GM10248 (cell line): ENCODE measurements at regions of chr16 and their contacts with region 1.

Region 1: GRCh38 chr16:69396187-69397061 is 10.6 kb upstream of the TERF2 start:
- DNase-seq: peak; percentile 57
- CTCF ChIP-seq: peak; percentile 38

Region 2: GRCh38 chr16:69410285-69410990 is 14.0 kb after region 1 on chr16:
- CTCF ChIA-PET with region 1: interaction called, 21 read pairs
- POLR2A ChIA-PET with region 1: no interaction called
- DNase-seq: no peak
- CTCF ChIP-seq: no peak

Region 3: GRCh38 chr16:69443927-69444631 is 47.7 kb after region 1 on chr16:
- CTCF ChIA-PET with region 1: interaction called, 10 read pairs
- POLR2A ChIA-PET with region 1: no interaction called
- DNase-seq: no peak
- CTCF ChIP-seq: no peak

Region 4: DNA sequence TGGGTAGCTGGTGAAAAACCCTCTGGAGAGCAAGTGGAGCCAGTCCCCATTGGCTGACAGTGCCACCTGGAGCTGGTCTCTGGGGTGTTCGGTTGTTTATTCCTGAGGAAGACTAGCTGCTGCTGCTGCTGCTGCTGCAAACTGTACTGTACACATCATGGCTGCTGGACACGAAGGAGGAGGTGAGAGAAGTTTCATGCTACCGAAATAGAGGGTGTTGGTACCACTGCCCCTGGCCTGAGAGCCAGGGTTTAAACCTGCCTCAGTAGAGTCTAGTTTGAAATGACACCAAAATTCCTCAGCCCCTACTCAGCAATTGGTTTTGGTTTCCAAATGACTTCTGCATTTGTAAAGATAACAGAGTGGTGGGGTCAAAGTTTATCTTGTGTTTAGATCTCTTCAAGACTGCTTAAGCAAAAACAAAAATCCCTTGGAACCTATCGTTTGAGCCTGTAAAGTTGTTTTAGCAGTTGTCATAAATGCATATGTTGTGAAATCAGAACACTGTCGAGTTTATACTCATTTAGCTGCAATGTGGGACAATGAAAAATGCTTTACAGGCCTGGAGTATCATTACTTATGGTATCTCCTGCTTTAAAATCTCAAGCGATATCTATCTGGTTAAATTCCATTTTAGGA is 68.8 kb after region 1 on chr16:
- CTCF ChIA-PET with region 1: interaction called, 11 read pairs
- POLR2A ChIA-PET with region 1: no interaction called
- DNase-seq: peak; percentile 41
- CTCF ChIP-seq: peak; percentile 30